Esophagus muscularis mucosa (tissue), 4 donors: ENCODE measurements at regions of chr2 and their contacts with region 1.

Region 1: DNA sequence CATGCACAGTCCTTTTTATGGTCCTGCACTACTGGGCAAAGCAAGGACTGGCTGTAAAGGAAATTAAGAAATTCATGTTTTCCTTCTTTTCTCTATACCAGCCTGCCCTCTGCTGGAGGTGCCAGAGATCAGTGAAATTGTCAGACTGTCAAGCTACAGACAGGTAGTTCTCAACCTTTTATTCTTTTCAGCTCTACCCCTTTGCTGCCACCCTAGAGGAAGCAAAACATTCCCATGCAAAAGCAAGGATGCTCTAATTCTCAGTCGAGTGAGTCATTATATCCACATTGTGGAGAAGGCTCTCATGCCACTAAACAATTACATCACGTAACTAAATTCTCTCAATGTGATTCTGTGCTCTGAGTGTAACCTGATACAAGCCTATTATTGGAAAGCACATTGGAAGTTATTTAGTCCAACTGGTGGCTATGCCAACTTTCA is 25.0 kb upstream of the RAPGEF4 start:
- DNase-seq: no peak
- H3K4me3 ChIP-seq: no peak overlapping the region
- H3K27ac ChIP-seq: no peak overlapping the region
- H3K4me1 ChIP-seq: peaks cover 0 to 4% (median 4%) of the 10 kb centered on the region in 4 donors
- H3K27me3 ChIP-seq: peaks cover 0 to 4% (median 0%) of the 10 kb centered on the region in 4 donors
- CTCF ChIP-seq: peak; percentile 39 to 57 (median 51)
- EP300 ChIP-seq: no peak
- POLR2A ChIP-seq: no peak

Region 2: DNA sequence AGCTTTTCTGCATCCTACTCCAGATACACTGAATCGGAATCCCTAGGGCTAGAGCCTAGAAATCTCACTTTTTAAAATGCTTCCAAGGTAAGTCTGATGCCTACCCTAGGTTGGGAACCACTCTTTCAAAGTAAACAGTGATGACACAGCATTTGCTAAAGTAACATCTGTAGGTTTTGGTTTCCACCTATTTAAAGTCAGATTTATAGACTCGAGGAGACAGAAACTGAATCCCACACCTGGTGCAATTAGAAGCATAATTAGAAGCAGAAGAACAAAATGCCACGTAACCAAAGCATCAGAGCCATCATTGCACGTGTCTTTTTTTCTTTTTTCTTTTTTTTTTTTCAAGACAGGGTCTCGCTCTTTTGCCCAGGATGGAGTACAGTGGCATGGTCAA is 113.8 kb before region 1 on chr2:
- intact Hi-C with region 1: loop called (anchors 10 kb)
- DNase-seq: no peak
- H3K4me3 ChIP-seq: no peak overlapping the region
- H3K27ac ChIP-seq: no peak overlapping the region
- H3K4me1 ChIP-seq: no peaks in the 10 kb centered on the region
- H3K27me3 ChIP-seq: no peaks in the 10 kb centered on the region
- CTCF ChIP-seq: no peak
- EP300 ChIP-seq: no peak
- POLR2A ChIP-seq: no peak

Region 3: GRCh38 chr2:173017646-173018420 is 307.2 kb after region 1 on chr2:
- intact Hi-C with region 1: no loop called
- DNase-seq: no peak
- H3K4me3 ChIP-seq: no peak overlapping the region
- H3K27ac ChIP-seq: no peak overlapping the region
- H3K4me1 ChIP-seq: no peaks in the 10 kb centered on the region
- H3K27me3 ChIP-seq: no peaks in the 10 kb centered on the region
- CTCF ChIP-seq: no peak
- EP300 ChIP-seq: no peak
- POLR2A ChIP-seq: no peak